Activated CD4-positive, alpha-beta T cell treated with anti-CD3 and anti-CD28 coated beads, Interleukin-2, amount 10 ng/mL, durations not matched to agents 24 days and 14 days (primary cell): ENCODE measurements at regions of chr11 and their contacts with region 1.

Region 1: GRCh38 chr11:60485986-60486385 is 6.6 kb upstream of the MS4A12 start:
- DNase-seq: peak; percentile 59
- H3K4me3 Mint-ChIP-seq: no peak overlapping the region
- H3K27ac Mint-ChIP-seq: no peak overlapping the region
- H3K4me1 Mint-ChIP-seq: no peaks in the 10 kb centered on the region
- H3K27me3 Mint-ChIP-seq: peaks cover 9% of the 10 kb centered on the region

Region 2: GRCh38 chr11:60363542-60364510 is 122.2 kb before region 1 on chr11:
- intact Hi-C with region 1: loop called (anchors 5 kb)
- DNase-seq: peak; percentile 88
- H3K4me3 Mint-ChIP-seq: no peak overlapping the region
- H3K27ac Mint-ChIP-seq: no peak overlapping the region
- H3K4me1 Mint-ChIP-seq: no peaks in the 10 kb centered on the region
- H3K27me3 Mint-ChIP-seq: peaks cover 8% of the 10 kb centered on the region

Region 3: DNA sequence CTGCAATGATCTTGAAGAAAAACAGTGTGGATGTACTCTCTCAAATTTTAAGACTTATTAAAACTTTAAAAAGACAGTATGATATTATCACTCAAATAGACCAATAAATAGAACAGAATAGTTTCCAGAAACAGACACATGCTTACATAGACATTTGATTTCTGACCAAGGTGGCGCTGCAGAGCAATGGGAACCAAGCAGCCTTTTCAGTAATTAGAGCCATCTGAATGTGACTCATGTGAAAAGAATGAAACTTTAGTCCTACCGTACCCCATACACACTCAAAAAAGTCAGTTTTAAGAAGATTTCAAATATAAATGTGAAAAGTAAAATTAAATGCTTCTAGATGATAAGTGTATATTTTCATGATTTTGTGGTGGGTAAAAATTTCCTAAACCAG is 139.3 kb after region 1 on chr11:
- intact Hi-C with region 1: no loop called
- DNase-seq: no peak
- H3K4me3 Mint-ChIP-seq: no peak overlapping the region
- H3K27ac Mint-ChIP-seq: no peak overlapping the region
- H3K4me1 Mint-ChIP-seq: no peaks in the 10 kb centered on the region
- H3K27me3 Mint-ChIP-seq: no peaks in the 10 kb centered on the region